ENCODE measurements at regions of chr5 and their contacts with region 1.

Region 1: DNA sequence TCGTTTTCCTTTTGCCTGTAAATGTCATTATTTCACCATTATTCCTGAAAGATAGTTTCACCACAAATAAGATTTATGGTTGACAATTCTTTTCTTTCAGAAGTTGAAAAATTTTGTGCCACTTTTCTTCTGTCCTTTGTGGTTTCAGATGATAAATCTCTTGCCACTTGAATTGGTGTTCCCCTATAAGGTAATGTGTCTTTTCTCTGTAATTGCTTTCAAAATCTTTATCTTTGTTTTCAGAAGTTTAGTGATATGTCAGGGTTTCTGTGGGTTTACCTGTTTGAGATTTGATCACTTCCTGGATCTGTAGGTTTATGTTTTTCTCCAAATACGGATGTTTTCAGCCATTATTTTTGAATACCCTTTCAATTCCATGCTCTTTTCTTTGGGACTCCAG is 14.6 kb downstream of the RASA1 start:
- DNase-seq: no peak
- H3K4me3 Mint-ChIP-seq: no peak overlapping the region
- H3K27ac Mint-ChIP-seq: peak overlapping the region; percentile 40
- H3K4me1 Mint-ChIP-seq: peaks cover 68% of the 10 kb centered on the region
- H3K27me3 Mint-ChIP-seq: no peaks in the 10 kb centered on the region
- CTCF ChIP-seq: no peak

Region 2: DNA sequence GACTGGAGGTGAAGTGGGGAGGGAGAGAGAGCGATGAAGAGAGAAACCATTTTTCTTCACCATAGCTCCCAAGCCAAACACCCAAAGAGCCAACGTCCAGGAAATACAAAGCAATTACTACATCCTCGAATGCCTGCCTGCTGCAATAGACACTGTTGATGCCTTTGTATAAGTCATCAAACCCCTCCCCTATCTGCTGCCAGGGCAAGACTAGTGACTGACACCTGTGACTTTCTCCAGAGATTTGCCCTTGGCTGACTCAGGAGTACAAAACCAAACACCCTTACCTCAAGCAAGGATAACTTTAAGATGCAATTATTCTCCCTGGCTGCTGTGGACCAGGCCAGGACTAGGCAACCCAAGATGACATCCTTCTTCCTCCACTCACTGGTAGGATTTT is 96.4 kb before region 1 on chr5:
- CTCF ChIA-PET with region 1: no interaction called
- intact Hi-C with region 1: no loop called
- DNase-seq: no peak
- H3K4me3 Mint-ChIP-seq: no peak overlapping the region
- H3K27ac Mint-ChIP-seq: no peak overlapping the region
- H3K4me1 Mint-ChIP-seq: peaks cover 21% of the 10 kb centered on the region
- H3K27me3 Mint-ChIP-seq: no peaks in the 10 kb centered on the region
- CTCF ChIP-seq: no peak

Region 3: GRCh38 chr5:87327998-87328397 is 45.7 kb after region 1 on chr5:
- CTCF ChIA-PET with region 1: no interaction called
- intact Hi-C with region 1: loop called (anchors 5 kb)
- DNase-seq: no peak
- H3K4me3 Mint-ChIP-seq: no peak overlapping the region
- H3K27ac Mint-ChIP-seq: peak overlapping the region; percentile 63
- H3K4me1 Mint-ChIP-seq: peaks cover 80% of the 10 kb centered on the region
- H3K27me3 Mint-ChIP-seq: no peaks in the 10 kb centered on the region
- CTCF ChIP-seq: no peak

Region 4: GRCh38 chr5:87570366-87570765 is 288.1 kb after region 1 on chr5:
- CTCF ChIA-PET with region 1: no interaction called
- intact Hi-C with region 1: no loop called
- DNase-seq: no peak
- H3K4me3 Mint-ChIP-seq: no peak overlapping the region
- H3K27ac Mint-ChIP-seq: no peak overlapping the region
- H3K4me1 Mint-ChIP-seq: peaks cover 7% of the 10 kb centered on the region
- H3K27me3 Mint-ChIP-seq: no peaks in the 10 kb centered on the region
- CTCF ChIP-seq: no peak